Activated CD4-positive, alpha-beta T cell treated with anti-CD3 and anti-CD28 coated beads, Interleukin-2, amount 10 ng/mL, durations not matched to agents 24 days and 14 days (primary cell): ENCODE measurements at regions of chr12 and their contacts with region 1.

Region 1: DNA sequence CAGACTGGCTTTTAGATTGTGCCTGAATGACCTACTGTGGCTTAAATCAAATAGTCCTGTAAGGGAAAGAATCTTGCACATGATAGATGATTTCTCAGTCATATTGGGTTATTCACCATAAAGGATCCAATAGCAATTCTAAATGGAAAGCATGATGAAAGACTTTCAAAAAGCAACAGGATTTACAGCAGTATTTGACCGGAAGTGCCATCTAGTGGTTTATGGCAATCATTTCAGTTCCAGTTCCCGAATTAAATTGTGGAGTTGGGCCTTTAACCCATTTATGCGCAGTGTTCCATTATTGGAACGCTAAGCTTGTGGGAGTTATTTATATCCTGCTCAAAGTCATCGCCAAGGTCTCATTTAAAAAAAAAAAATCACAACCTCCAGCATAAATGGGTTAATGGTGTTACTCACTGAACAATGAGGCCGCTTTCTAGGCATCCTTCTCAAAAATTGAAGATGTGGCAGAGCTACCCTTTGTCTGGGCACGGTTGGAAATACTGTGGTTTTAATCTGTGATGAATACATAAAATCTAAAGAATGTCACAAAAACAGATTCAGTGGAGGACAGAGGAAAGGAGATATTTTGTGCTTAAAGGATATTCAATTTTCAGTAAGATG is 60.8 kb upstream of the REP15 start:
- DNase-seq: peak; percentile 59
- H3K4me3 Mint-ChIP-seq: no peak overlapping the region
- H3K27ac Mint-ChIP-seq: no peak overlapping the region
- H3K4me1 Mint-ChIP-seq: peaks cover 10% of the 10 kb centered on the region
- H3K27me3 Mint-ChIP-seq: peaks cover 2% of the 10 kb centered on the region

Region 2: DNA sequence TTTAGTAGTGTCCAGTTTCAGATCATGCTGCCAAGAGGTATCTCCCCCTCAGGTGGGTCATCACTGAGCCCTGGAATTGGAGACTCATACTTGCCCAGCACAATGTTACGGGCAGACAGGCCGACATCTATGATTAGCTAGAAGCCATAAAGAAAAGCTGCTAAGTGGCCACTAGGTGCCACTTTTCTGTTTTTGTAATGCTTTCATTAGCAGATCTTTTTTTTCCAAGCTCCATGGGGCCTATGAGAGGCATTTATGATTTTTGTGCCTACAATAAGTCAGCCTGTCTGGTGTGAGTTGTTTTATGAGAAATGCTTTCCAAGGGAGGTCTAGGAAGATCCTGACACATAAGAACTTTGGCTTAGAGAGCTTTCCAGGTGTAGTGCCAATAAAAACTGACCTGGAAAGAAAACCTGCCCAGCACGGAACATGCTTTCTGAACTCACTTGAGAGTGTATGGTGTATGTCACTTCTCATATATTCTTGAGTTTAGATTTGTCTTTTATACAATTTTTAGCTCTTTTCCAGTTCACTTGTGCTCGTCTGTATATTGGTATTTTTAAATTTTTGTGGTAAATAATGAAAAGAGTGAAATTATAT is 210.7 kb before region 1 on chr12:
- intact Hi-C with region 1: loop called (anchors 1 kb)
- DNase-seq: peak; percentile 58
- H3K4me3 Mint-ChIP-seq: no peak overlapping the region
- H3K27ac Mint-ChIP-seq: no peak overlapping the region
- H3K4me1 Mint-ChIP-seq: peaks cover 7% of the 10 kb centered on the region
- H3K27me3 Mint-ChIP-seq: no peaks in the 10 kb centered on the region

Region 3: GRCh38 chr12:27583057-27583797 is 52.2 kb before region 1 on chr12:
- intact Hi-C with region 1: loop called (anchors 10 kb)
- DNase-seq: no peak
- H3K4me3 Mint-ChIP-seq: no peak overlapping the region
- H3K27ac Mint-ChIP-seq: no peak overlapping the region
- H3K4me1 Mint-ChIP-seq: peaks cover 25% of the 10 kb centered on the region
- H3K27me3 Mint-ChIP-seq: no peaks in the 10 kb centered on the region

Region 4: GRCh38 chr12:27723212-27723611 is 87.8 kb after region 1 on chr12:
- intact Hi-C with region 1: no loop called
- DNase-seq: no peak
- H3K4me3 Mint-ChIP-seq: no peak overlapping the region
- H3K27ac Mint-ChIP-seq: peak overlapping the region; percentile 20
- H3K4me1 Mint-ChIP-seq: peaks cover 9% of the 10 kb centered on the region
- H3K27me3 Mint-ChIP-seq: no peaks in the 10 kb centered on the region